ENCODE measurements at regions of chr7 and their contacts with region 1.

Region 1: DNA sequence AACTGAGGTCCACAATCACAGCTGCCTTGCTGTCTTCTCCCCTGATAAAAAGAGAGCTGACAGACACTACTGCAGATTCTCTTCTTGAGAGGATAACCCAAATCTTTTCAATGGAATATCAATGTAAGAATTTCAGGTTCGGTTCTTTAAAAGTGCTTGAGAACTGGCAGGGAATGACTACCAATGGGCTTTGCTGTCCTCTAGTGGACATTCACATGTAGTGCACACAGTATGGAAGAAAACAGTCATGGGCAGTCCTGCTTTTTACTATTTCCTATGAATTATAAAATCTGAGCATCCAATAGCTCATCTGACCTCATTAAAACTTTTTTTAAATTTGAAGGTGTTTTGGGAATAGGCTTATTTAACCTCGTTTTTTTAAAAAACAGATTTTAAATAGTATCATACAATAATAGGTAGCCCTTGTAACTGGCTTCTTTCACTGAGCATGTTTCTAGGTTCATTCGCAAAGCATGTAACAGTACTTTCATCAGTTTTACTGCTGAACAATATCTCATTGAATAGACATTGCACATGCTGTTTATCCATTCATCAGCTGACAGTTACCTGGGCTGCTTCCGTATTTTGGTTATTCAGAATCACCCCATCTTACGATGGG is 18.3 kb downstream of the FZD9 start:
- DNase-seq: no peak

Region 2: GRCh38 chr7:73328696-73329095 is 123.2 kb before region 1 on chr7:
- intact Hi-C with region 1: loop called (anchors 1 kb)
- DNase-seq: peak in 1 of 10 donors; percentile 1

Region 3: DNA sequence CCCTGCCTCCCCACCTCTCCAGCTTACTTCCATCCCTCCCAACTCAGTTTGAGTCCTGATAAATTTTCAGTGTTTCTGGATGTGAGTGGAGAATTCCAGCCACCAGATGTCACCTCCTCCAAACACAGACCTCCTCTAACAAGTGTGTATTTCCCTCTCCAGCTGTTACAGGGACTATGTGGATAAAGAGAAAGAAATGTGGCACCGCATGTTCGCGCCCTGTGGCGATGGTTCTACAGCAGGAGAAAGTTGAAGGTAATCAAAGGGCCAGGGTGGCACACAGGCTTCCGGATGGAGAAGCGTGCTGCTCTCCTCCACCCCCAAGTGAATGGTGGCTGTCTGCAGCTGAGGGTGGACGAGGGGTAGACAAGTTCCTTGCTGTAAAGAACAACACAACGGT is 109.2 kb before region 1 on chr7:
- intact Hi-C with region 1: loop called (anchors 2 kb)
- DNase-seq: peak in 2 of 10 donors; percentile 9 to 16

Region 4: DNA sequence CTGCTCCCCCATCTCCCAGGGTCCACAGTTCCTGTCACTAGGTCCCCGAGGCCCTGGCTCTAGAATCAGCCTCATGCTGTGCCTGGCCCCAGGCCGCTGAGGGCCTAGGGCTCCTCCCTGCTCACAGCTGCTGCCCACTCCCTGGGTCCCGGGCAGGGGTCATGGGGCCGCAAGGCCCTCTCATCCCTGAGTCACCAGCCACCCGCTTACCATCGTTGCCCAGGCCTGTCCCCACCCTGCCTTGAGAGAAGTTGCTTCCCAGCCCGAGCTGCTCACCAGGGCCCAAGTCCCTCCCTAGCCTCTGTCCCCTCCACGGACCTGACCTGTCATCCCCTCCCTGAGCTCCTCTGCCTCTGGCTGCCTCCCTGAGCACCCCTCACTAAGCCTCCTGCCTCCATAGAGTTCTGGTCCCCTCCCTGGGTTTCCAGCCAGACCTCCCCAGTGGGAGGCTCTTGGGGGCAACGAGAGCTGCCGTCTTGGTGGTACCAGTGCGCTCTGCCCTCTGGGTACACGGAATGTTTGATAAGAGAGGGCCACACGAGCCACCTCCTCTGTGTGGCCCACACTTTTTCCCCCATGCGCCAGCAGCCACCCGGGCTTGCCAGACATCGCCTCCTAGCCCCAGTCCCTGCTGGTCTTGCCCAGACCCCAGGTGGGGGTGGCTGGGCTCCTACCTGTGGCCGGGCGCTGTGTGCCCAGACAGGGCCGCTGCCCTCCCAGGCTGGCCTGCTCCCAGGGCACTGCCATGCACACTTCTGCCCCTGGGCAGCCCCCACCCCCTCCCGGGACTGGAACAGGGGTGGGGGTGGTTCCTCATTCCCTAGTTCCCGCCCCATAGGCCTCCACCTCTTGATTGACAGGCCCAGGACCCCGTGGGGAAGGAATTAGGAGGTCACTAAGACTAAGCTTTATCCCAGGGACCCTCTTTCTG is 151.1 kb after region 1 on chr7:
- intact Hi-C with region 1: no loop called
- DNase-seq: peak in 2 of 10 donors; percentile 29 to 90

Measured in posterior cingulate gyrus (tissue), 11 donors.